Activated CD4-positive, alpha-beta T cell treated with anti-CD3 and anti-CD28 coated beads, Interleukin-2, amount 10 ng/mL, durations not matched to agents 7 days and 5 days (primary cell): ENCODE measurements at regions of chr1 and their contacts with region 1.

Region 1: DNA sequence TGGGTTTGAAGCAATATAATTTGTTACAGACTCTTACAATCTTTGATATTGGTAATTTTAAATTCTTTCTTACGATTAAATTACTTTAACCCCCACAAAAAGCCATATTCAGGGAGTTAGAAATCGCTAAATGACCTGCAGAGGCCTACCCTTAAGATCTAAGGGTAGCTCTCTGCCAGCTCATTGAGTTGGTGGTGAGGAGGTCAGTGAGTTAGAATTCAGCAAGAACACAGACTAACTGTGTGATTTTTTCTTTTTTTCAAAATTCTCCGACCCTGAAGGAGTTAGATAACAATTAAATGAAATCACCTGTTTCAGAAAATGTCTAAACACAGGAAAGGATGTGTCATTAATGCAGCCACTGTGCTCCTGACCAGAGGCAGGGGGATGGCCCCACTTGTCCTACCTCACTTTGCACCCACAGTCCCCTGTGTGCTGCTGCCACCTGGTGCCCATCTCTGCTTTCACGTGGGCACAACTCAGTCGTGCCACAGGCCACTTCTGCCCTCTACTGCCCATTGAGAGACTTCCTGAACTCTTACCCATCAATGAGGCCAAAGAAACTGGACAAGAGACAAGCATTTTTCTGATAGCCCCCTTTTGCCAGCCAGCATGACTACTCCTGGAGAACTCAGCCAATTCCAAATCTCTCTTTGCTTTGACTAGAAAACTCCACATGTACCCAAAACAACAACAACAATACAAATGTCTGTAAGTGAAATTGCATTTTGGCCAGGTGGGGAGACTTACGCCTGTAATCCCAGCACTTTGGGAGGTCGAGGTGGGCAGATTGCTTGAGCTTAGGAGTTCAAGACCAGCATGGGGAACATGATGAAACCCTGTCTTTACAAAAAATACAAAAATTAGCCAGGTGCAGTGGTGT is 8.4 kb downstream of the CFAP45 start:
- DNase-seq: peak; percentile 81
- H3K4me3 Mint-ChIP-seq: no peak overlapping the region
- H3K27ac Mint-ChIP-seq: no peak overlapping the region
- H3K4me1 Mint-ChIP-seq: peaks cover 15% of the 10 kb centered on the region
- H3K27me3 Mint-ChIP-seq: peaks cover 14% of the 10 kb centered on the region

Region 2: GRCh38 chr1:159737238-159737916 is 154.1 kb before region 1 on chr1:
- CTCF ChIA-PET with region 1: no interaction called
- POLR2A ChIA-PET with region 1: no interaction called
- DNase-seq: no peak
- H3K4me3 Mint-ChIP-seq: no peak overlapping the region
- H3K27ac Mint-ChIP-seq: no peak overlapping the region
- H3K4me1 Mint-ChIP-seq: no peaks in the 10 kb centered on the region
- H3K27me3 Mint-ChIP-seq: peaks cover 19% of the 10 kb centered on the region

Region 3: DNA sequence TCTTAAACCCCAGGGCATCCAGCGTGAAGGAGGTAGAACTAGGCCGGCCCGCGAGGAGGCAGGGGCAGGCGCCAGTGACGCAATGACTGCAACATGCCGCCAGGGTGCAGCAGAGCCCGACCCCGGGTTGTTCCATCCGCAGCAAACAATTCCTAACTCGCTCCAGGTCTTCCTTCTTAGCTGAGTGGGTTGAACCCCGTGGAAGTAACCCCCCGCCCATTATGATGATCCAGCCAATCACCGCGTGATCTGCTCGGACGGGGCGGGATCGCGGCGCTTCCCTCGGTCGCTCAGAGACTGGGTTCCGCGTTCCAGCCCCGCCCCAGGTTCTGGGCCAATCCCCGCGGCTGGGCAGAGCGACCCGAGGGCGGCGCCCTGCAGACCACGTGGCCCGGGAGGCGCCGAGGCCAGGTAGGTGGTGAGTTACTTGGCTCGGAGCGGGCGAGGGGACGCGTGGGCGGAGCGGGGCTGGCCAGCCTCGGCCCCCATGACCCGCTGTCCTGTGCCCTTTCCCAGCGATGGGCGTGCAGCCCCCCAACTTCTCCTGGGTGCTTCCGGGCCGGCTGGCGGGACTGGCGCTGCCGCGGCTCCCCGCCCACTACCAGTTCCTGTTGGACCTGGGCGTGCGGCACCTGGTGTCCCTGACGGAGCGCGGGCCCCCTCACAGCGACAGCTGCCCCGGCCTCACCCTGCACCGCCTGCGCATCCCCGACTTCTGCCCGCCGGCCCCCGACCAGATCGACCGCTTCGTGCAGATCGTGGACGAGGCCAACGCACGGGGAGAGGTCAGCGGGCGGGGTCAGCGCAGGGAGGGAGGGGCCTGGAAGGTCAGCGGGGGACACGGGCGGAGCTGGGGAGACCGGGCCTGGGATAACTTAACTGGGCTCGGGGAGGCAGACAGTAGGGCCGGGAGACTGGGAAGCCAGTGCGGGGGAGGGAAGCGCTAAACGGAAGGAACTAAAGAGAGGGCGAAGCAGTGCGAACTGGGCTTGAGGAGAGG is 110.6 kb before region 1 on chr1 and contains the start of gene DUSP23:
- CTCF ChIA-PET with region 1: interaction called, 12 read pairs
- POLR2A ChIA-PET with region 1: no interaction called
- DNase-seq: peak; percentile 96
- H3K4me3 Mint-ChIP-seq: peak within 1 kb of the TSS; percentile 75
- H3K27ac Mint-ChIP-seq: peak within 1 kb of the TSS; percentile 41
- H3K4me1 Mint-ChIP-seq: peaks cover 30% of the 10 kb centered on the region
- H3K27me3 Mint-ChIP-seq: peaks cover 8% of the 10 kb centered on the region
- total RNA-seq, gene DUSP23: 22.9 to 23.8 TPM

Region 4: GRCh38 chr1:159798893-159799292 is 92.6 kb before region 1 on chr1:
- CTCF ChIA-PET with region 1: interaction called, 29 read pairs
- POLR2A ChIA-PET with region 1: no interaction called
- DNase-seq: peak; percentile 51
- H3K4me3 Mint-ChIP-seq: no peak overlapping the region
- H3K27ac Mint-ChIP-seq: no peak overlapping the region
- H3K4me1 Mint-ChIP-seq: peaks cover 18% of the 10 kb centered on the region
- H3K27me3 Mint-ChIP-seq: peaks cover 43% of the 10 kb centered on the region